Heart left ventricle (tissue), 16 donors: ENCODE measurements at regions of chr16 and their contacts with region 1.

Region 1: GRCh38 chr16:56980792-56981724 is 8.3 kb upstream of the NLRC5 start:
- DNase-seq: no peak
- ATAC-seq: no peak
- H3K4me3 ChIP-seq: no peak overlapping the region
- H3K27ac ChIP-seq: no peak overlapping the region
- H3K4me1 ChIP-seq: peaks cover 0 to 73% (median 20%) of the 10 kb centered on the region in 12 donors
- H3K27me3 ChIP-seq: no peaks in the 10 kb centered on the region
- CTCF ChIP-seq: peak in 1 of 12 donors; percentile 6
- POLR2A ChIP-seq: no peak

Region 2: GRCh38 chr16:57045694-57046381 is 64.8 kb after region 1 on chr16:
- intact Hi-C with region 1: loop called in 1 of 10 experiments (anchors 5 kb)
- DNase-seq: peak; percentile 63 to 84 (median 67)
- ATAC-seq: peak; percentile 50 to 86 (median 78)
- H3K4me3 ChIP-seq: peak overlapping the region in 4 of 12 donors; percentile 9 to 29 (median 24)
- H3K27ac ChIP-seq: no peak overlapping the region
- H3K4me1 ChIP-seq: peaks cover 0 to 23% (median 6%) of the 10 kb centered on the region in 12 donors
- H3K27me3 ChIP-seq: no peaks in the 10 kb centered on the region
- CTCF ChIP-seq: peak; percentile 34 to 79 (median 62)
- POLR2A ChIP-seq: no peak